Tibial artery (tissue), 4 donors: ENCODE measurements at regions of chr3 and their contacts with region 1.

Region 1: GRCh38 chr3:48594431-48595049 is 589 bp downstream of the COL7A1 start:
- DNase-seq: no peak
- H3K4me3 ChIP-seq: peak overlapping the region; percentile 43 to 55
- H3K27ac ChIP-seq: peak overlapping the region in 1 of 2 donors; percentile 90
- H3K4me1 ChIP-seq: peaks cover 5 to 55% (median 49%) of the 10 kb centered on the region in 4 donors
- H3K27me3 ChIP-seq: peaks cover 0 to 6% of the 10 kb centered on the region in 2 donors
- CTCF ChIP-seq: no peak

Region 2: GRCh38 chr3:48556793-48557626 is 37.5 kb before region 1 on chr3 and contains the start of gene PFKFB4:
- intact Hi-C with region 1: loop called (anchors 5 kb)
- DNase-seq: peak; percentile 99 to 100
- H3K4me3 ChIP-seq: peak within 1 kb of the TSS; percentile 57 to 67
- H3K27ac ChIP-seq: peak within 1 kb of the TSS; percentile 75
- H3K4me1 ChIP-seq: peaks cover 0 to 54% (median 40%) of the 10 kb centered on the region in 4 donors
- H3K27me3 ChIP-seq: no peaks in the 10 kb centered on the region
- CTCF ChIP-seq: peak in 1 of 2 experiments; percentile 10

Region 3: GRCh38 chr3:48663415-48664312 is 69.1 kb after region 1 on chr3:
- intact Hi-C with region 1: no loop called
- DNase-seq: peak; percentile 91 to 98
- H3K4me3 ChIP-seq: peak overlapping the region; percentile 52 to 56
- H3K27ac ChIP-seq: peak overlapping the region; percentile 85 to 86
- H3K4me1 ChIP-seq: peaks cover 0 to 32% (median 18%) of the 10 kb centered on the region in 4 donors
- H3K27me3 ChIP-seq: peaks cover 0 to 13% of the 10 kb centered on the region in 2 donors
- CTCF ChIP-seq: peak; percentile 60 to 69